ENCODE measurements at regions of chr15 and their contacts with region 1.

Region 1: GRCh38 chr15:86444527-86444926 is 364.9 kb downstream of the AGBL1 start:
- DNase-seq: no peak
- ATAC-seq: no peak
- H3K4me3 ChIP-seq: no peak overlapping the region
- H3K27ac ChIP-seq: no peak overlapping the region
- H3K4me1 ChIP-seq: no peaks in the 10 kb centered on the region
- H3K27me3 ChIP-seq: no peaks in the 10 kb centered on the region
- CTCF ChIP-seq: no peak
- POLR2A ChIP-seq: no peak
- RAD21 ChIP-seq: no peak

Region 2: GRCh38 chr15:85964471-85964870 is 480.1 kb before region 1 on chr15:
- CTCF ChIA-PET with region 1: no interaction called
- POLR2A ChIA-PET with region 1: no interaction called
- dilution Hi-C with region 1: no loop called
- in situ Hi-C with region 1: no loop called
- intact Hi-C with region 1: no loop called
- DNase-seq: no peak
- ATAC-seq: no peak
- H3K4me3 ChIP-seq: no peak overlapping the region
- H3K27ac ChIP-seq: no peak overlapping the region
- H3K4me1 ChIP-seq: no peaks in the 10 kb centered on the region
- H3K27me3 ChIP-seq: no peaks in the 10 kb centered on the region
- CTCF ChIP-seq: no peak
- POLR2A ChIP-seq: no peak
- RAD21 ChIP-seq: no peak

Region 3: GRCh38 chr15:86044981-86045380 is 399.5 kb before region 1 on chr15:
- CTCF ChIA-PET with region 1: no interaction called
- POLR2A ChIA-PET with region 1: no interaction called
- dilution Hi-C with region 1: no loop called
- in situ Hi-C with region 1: no loop called
- intact Hi-C with region 1: no loop called
- DNase-seq: no peak
- ATAC-seq: no peak
- H3K4me3 ChIP-seq: no peak overlapping the region
- H3K27ac ChIP-seq: no peak overlapping the region
- H3K4me1 ChIP-seq: no peaks in the 10 kb centered on the region
- H3K27me3 ChIP-seq: no peaks in the 10 kb centered on the region
- CTCF ChIP-seq: no peak
- POLR2A ChIP-seq: no peak
- RAD21 ChIP-seq: no peak

Region 4: DNA sequence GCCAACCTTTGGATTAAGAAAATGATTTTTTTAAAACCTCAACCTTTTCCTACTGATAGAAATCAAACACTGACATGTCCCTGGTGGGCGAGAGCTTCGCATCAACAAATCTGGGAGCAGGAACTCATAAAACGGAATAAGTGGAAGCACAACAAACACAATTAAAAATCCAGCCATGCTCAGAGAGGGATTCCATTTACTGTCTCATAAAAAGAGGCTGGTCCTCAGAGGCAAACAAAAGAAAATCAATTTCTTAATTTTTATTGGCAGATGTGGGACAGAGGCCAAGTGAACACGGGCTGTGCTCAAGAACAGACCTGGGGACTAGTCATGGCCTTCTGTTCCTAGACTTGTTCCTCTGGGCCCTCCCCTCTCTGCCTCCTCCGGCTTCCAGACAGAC is 1597.5 kb after region 1 on chr15:
- CTCF ChIA-PET with region 1: no interaction called
- POLR2A ChIA-PET with region 1: interaction called, 16 read pairs
- dilution Hi-C with region 1: no loop called
- in situ Hi-C with region 1: no loop called
- intact Hi-C with region 1: no loop called
- DNase-seq: no peak
- ATAC-seq: no peak
- H3K4me3 ChIP-seq: no peak overlapping the region
- H3K27ac ChIP-seq: no peak overlapping the region
- H3K4me1 ChIP-seq: no peaks in the 10 kb centered on the region
- H3K27me3 ChIP-seq: no peaks in the 10 kb centered on the region
- CTCF ChIP-seq: no peak
- POLR2A ChIP-seq: no peak
- RAD21 ChIP-seq: no peak

Measured in IMR-90 (cell line).